Ascending aorta (tissue), 2 donors: ENCODE measurements at regions of chr19 and their contacts with region 1.

Region 1: GRCh38 chr19:51570962-51571575 is at the start of gene ZNF175:
- DNase-seq: peak; percentile 74 to 97
- H3K4me3 ChIP-seq: peak within 1 kb of the TSS; percentile 56 to 94
- H3K27ac ChIP-seq: peak within 1 kb of the TSS; percentile 49 to 72
- H3K4me1 ChIP-seq: peaks cover 0 to 12% of the 10 kb centered on the region in 2 donors
- H3K27me3 ChIP-seq: no peaks in the 10 kb centered on the region
- CTCF ChIP-seq: no peak
- total RNA-seq, gene ZNF175: 6.1 TPM

Region 2: DNA sequence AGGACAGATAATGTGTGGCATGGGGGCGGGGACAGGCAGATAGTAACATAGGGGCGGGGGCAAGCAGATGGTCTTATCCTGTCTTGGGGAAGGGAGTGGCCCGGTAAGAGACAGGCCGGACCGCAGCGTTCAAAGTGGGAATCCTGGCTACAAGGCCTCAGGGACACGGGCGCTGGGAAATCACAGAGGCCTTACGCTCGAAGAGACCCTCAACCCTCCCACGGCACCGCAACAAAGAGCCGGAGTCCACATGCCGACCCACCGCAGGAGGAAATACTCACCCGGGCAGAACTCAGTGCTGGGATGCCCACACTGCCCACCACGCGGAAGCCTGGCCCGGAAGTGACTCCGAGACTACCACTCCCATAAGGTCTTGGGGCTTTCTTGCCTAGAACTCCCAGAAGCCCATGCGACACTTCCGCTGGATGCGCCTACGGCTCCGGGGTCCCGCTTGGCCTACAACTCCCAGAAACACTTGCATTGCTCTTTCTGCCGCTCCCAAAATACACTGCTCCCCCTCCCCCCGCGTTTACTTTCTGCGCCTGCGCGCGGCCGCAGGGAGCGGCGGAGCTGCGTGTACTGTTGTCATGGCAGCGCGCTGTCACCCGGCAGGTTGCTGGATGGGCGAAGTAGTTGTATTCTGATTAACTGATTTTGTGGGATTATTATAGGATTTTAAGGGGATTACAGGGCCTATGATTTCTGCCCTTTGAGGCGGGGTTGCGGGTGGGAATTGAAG is 462.8 kb before region 1 on chr19 and contains the start of gene CTU1:
- intact Hi-C with region 1: loop called (anchors 5 kb)
- DNase-seq: peak; percentile 98 to 100
- H3K4me3 ChIP-seq: peak within 1 kb of the TSS; percentile 69 to 74
- H3K27ac ChIP-seq: peak within 1 kb of the TSS; percentile 37 to 45
- H3K4me1 ChIP-seq: peaks cover 6 to 9% of the 10 kb centered on the region in 2 donors
- H3K27me3 ChIP-seq: no peaks in the 10 kb centered on the region
- CTCF ChIP-seq: peak in 1 of 3 experiments; percentile 50
- total RNA-seq, gene CTU1: 8.9 TPM

Region 3: GRCh38 chr19:51393959-51394836 is 176.9 kb before region 1 on chr19:
- intact Hi-C with region 1: loop called (anchors 5 kb)
- DNase-seq: peak; percentile 92 to 98
- H3K4me3 ChIP-seq: peak overlapping the region; percentile 43 to 63
- H3K27ac ChIP-seq: peak overlapping the region; percentile 74
- H3K4me1 ChIP-seq: peaks cover 3 to 8% of the 10 kb centered on the region in 2 donors
- H3K27me3 ChIP-seq: no peaks in the 10 kb centered on the region
- CTCF ChIP-seq: peak in 1 of 3 experiments; percentile 5

Region 4: DNA sequence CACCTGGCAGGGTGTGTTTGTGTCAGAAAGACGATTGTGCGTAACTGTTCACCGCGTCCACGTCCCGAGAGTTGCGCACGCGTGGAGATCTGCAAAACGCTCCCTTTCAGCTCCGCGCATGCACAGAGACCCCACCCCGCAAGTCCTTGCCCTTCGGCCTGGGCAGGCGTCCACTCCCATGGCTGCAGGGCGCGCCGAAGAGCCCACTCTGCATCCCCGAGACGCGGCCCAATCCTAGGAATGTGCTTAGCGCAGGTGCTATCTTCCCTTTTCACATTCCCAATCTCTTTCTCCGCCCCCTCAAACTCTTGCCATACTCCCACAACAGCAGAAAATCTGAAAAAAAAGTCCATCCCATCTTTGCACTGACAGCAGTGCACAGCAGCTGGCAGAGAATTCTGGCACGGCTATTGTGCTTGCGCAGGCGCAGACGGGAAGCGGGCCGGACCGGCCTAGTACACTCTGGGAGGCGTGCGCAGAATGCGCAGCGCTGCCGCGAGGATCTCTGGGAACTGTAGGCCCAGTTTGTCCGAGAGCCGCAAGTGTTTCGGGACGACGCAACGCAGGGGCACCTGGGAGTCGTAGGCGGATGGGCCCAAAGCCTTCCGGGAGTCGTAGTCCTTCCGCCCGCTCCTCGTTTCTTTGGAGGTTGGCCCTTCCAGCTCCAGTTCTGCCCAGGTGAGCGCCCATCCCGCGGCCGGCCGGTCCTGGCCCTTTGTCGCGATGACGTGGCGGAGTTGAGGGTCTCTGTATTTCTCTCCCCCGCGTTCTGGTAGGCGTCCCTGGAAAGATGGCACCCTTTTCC is 23.1 kb after region 1 on chr19:
- intact Hi-C with region 1: loop called (anchors 1 kb)
- DNase-seq: peak; percentile 91 to 99
- H3K4me3 ChIP-seq: peak overlapping the region; percentile 71 to 84
- H3K27ac ChIP-seq: peak overlapping the region in 1 of 2 donors; percentile 58
- H3K4me1 ChIP-seq: peaks cover 10 to 11% of the 10 kb centered on the region in 2 donors
- H3K27me3 ChIP-seq: no peaks in the 10 kb centered on the region
- CTCF ChIP-seq: no peak

Region 5: DNA sequence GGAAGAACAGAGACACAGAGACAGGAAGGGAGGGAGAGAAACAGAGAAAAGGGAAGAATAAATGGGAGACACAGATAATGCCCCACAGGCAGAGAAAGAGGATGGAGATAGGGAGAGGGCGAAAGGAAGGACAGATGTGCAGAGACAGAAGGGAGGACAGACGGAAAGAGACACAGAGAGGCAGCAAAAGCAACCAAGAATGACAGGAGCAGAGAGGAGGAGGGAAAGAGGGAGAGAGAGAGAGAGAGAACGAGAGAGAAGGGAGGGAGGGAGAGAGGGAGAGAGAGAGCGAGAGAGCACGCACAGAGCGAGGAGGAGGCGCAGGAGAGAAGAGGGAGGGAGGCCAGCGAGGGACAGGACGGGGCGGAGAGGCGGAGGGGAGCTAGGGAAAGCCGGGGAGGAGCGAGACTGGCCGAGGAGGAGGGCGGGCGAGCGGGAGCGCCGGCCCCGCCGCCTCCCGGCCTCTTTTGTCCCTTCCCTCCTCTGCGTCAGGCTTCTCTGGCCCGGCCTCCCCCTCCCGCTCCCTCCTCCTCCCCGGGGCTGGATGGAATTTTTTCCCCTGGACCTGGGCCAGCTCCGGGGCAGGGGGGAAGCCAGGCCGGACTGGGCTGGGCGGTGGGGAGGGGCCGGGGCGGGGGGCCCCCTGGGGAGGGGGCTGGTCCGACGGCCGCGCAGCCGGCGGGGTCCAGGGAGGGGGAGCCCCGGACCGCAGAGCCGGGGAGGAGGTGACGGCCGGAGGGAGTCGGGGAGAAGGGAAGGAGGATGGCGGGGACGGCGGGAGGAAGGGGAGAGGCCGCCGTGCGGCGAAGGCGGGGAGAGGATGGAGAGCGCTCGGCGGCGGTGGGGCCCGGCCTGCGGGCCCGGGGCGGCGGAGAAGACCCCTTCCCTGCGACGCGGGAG is 117.9 kb after region 1 on chr19:
- intact Hi-C with region 1: loop called (anchors 1 kb)
- DNase-seq: peak in 1 of 2 donors; percentile 94
- H3K4me3 ChIP-seq: peak overlapping the region; percentile 71 to 89
- H3K27ac ChIP-seq: peak overlapping the region; percentile 97 to 100
- H3K4me1 ChIP-seq: peaks cover 12 to 21% of the 10 kb centered on the region in 2 donors
- H3K27me3 ChIP-seq: no peaks in the 10 kb centered on the region
- CTCF ChIP-seq: no peak

Region 6: GRCh38 chr19:51703575-51704515 is 132.8 kb after region 1 on chr19:
- intact Hi-C with region 1: loop called (anchors 1 kb)
- DNase-seq: peak; percentile 90 to 99
- H3K4me3 ChIP-seq: peak overlapping the region; percentile 60 to 76
- H3K27ac ChIP-seq: peak overlapping the region; percentile 80 to 93
- H3K4me1 ChIP-seq: peaks cover 9 to 17% of the 10 kb centered on the region in 2 donors
- H3K27me3 ChIP-seq: no peaks in the 10 kb centered on the region
- CTCF ChIP-seq: peak; percentile 32 to 54 (median 44)